ENCODE measurements at regions of chr1 and their contacts with region 1.

Region 1: DNA sequence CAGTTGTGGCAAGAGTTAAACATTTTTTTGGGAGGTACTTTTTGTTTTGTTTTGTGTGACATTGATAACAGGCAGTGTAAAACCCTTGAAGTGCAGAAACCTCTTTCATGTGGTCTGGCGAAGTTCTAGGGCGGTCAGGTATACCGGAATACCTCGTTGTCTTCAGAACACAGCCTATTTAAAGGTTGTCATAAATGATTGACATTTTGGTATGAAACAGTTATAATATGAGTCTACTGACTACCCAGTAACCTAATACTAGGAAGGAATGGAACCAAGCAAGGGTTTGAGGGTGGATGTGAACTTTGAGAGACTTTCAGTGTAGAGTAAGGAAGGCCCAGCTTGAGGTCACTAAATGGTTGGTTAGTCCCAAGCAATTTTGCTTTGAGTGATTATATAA is 40.5 kb downstream of the PATJ start:
- DNase-seq: peak; percentile 11 to 88 (median 66)
- ATAC-seq: peak; percentile 96
- H3K4me3 ChIP-seq: peak overlapping the region in 1 of 2 experiments; percentile 14
- H3K4me3 Mint-ChIP-seq: peak overlapping the region; percentile 76
- H3K27ac ChIP-seq: peak overlapping the region; percentile 24 to 47
- H3K27ac Mint-ChIP-seq: peak overlapping the region; percentile 85
- H3K4me1 ChIP-seq: peaks cover 37% of the 10 kb centered on the region
- H3K4me1 Mint-ChIP-seq: peaks cover 61% of the 10 kb centered on the region
- H3K27me3 ChIP-seq: no peaks in the 10 kb centered on the region
- H3K27me3 Mint-ChIP-seq: no peaks in the 10 kb centered on the region
- CTCF ChIP-seq: no peak

Region 2: DNA sequence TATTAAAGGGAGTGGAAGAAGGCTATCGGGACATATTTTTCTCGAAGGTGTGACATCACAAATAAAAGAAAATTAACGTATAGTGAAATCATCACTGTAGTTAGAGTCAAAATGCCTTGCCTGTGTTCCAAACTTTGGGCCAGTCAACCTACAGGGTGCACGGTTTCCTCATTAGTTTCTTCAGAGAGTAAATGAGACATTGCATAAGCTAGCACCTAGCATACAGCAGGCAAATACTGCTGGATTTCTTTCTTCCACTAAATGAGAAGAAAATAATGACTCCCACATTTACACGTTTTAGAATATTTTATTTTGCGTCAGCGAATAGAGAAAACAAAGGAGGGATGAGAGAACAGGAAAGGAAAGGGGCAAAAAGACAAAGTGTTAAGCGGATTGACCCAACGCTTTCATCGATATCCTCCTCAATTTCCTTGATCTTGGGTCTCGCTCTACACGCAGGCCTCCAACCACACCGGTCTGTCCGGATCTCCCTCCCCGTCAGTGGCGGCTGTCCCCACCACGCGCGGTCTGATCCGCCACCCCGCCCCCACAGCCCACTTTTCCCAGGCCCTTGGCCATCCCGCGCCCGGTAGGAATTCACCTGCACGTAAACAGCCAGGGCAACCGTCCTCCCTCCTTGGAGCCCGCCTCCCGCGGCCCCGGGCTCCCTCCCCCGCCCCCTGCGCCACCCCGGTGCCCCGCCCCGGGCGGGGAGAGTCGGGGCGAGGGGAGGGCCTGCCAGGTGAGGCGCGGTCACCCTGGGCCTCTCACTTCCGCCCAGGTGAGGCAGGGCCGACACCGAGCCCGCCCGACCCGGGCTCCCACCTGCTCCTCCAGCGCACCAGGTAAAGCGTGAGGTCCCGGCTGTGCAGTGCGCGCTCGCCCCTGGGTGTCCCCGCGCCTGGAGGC is 40.8 kb before region 1 on chr1 and contains the start of gene PATJ:
- CTCF ChIA-PET with region 1: interaction called, 3 read pairs
- POLR2A ChIA-PET with region 1: no interaction called
- intact Hi-C with region 1: loop called (anchors 2 to 5 kb)
- DNase-seq: peak; percentile 22 to 81 (median 68)
- ATAC-seq: peak; percentile 90
- H3K4me3 ChIP-seq: peak within 1 kb of the TSS; percentile 49 to 78
- H3K4me3 Mint-ChIP-seq: peak within 1 kb of the TSS; percentile 95
- H3K27ac ChIP-seq: peak within 1 kb of the TSS; percentile 60 to 68
- H3K27ac Mint-ChIP-seq: peak within 1 kb of the TSS; percentile 94
- H3K4me1 ChIP-seq: peaks cover 7% of the 10 kb centered on the region
- H3K4me1 Mint-ChIP-seq: peaks cover 31% of the 10 kb centered on the region
- H3K27me3 ChIP-seq: no peaks in the 10 kb centered on the region
- H3K27me3 Mint-ChIP-seq: no peaks in the 10 kb centered on the region
- CTCF ChIP-seq: no peak
- total RNA-seq, gene PATJ: 33.7 to 35.4 TPM

Region 3: GRCh38 chr1:61825393-61825792 is 42.6 kb after region 1 on chr1:
- CTCF ChIA-PET with region 1: no interaction called
- POLR2A ChIA-PET with region 1: no interaction called
- intact Hi-C with region 1: loop called in 1 of 2 experiments (anchors 1 kb)
- DNase-seq: no peak
- ATAC-seq: no peak
- H3K4me3 ChIP-seq: no peak overlapping the region
- H3K4me3 Mint-ChIP-seq: no peak overlapping the region
- H3K27ac ChIP-seq: no peak overlapping the region
- H3K27ac Mint-ChIP-seq: no peak overlapping the region
- H3K4me1 ChIP-seq: no peaks in the 10 kb centered on the region
- H3K4me1 Mint-ChIP-seq: no peaks in the 10 kb centered on the region
- H3K27me3 ChIP-seq: no peaks in the 10 kb centered on the region
- H3K27me3 Mint-ChIP-seq: no peaks in the 10 kb centered on the region
- CTCF ChIP-seq: no peak

Measured in CD8-positive, alpha-beta T cell (primary cell).